ENCODE measurements at regions of chr15 and their contacts with region 1.

Region 1: GRCh38 chr15:65638681-65639089 is 16.9 kb downstream of the SLC24A1 start:
- DNase-seq: peak; percentile 84 to 96
- ATAC-seq: peak; percentile 74 to 87
- H3K4me3 ChIP-seq: no peak overlapping the region
- H3K27ac ChIP-seq: no peak overlapping the region
- H3K4me1 ChIP-seq: peaks cover 17% of the 10 kb centered on the region
- CTCF ChIP-seq: peak; percentile 97
- EP300 ChIP-seq: no peak
- POLR2A ChIP-seq: no peak
- RAD21 ChIP-seq: peak; percentile 88 to 96

Region 2: GRCh38 chr15:65610871-65611718 is 27.6 kb before region 1 on chr15 and contains the start of gene INTS14:
- CTCF ChIA-PET with region 1: interaction called, 15 read pairs
- POLR2A ChIA-PET with region 1: interaction called, 10 read pairs
- DNase-seq: peak; percentile 97 to 99
- ATAC-seq: peak; percentile 97 to 99
- H3K4me3 ChIP-seq: peak within 1 kb of the TSS; percentile 83
- H3K27ac ChIP-seq: peak within 1 kb of the TSS; percentile 93 to 94
- H3K4me1 ChIP-seq: peaks cover 18% of the 10 kb centered on the region
- CTCF ChIP-seq: peak; percentile 81
- EP300 ChIP-seq: no peak
- POLR2A ChIP-seq: peak; percentile 86
- RAD21 ChIP-seq: peak; percentile 59 to 82
- polyA plus RNA-seq, gene INTS14: 81.4 and 82.1 TPM in 2 replicates

Region 3: DNA sequence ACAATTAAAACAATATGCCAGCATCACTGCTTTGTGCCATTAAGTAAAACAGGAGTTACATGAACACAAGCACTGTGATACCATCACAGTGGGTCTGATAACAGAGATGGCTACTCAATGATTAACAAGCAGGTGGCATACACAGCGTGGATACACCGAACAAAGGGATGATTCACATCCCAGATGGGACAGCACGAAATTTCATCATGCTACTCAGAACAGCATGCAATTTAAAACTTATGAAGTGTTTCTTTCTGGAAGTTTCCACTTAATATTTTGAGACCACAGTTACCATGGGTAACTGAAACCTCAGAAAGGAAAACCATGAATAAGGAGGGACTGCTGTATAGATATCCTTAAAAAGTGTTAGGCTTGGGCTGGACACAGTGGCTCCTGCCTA is 27.6 kb after region 1 on chr15:
- CTCF ChIA-PET with region 1: interaction called, 229 read pairs
- POLR2A ChIA-PET with region 1: no interaction called
- DNase-seq: peak in 1 of 2 experiments; percentile 49
- ATAC-seq: peak; percentile 74 to 96
- H3K4me3 ChIP-seq: no peak overlapping the region
- H3K27ac ChIP-seq: peak overlapping the region; percentile 59 to 64; a peak in 4 of 6 replicates
- H3K4me1 ChIP-seq: peaks cover 11% of the 10 kb centered on the region
- CTCF ChIP-seq: no peak
- EP300 ChIP-seq: no peak
- POLR2A ChIP-seq: no peak
- RAD21 ChIP-seq: 0 out of 5 replicates have a peak, but pooled peaks of 1 of the 2 experiments have one; percentile 17

Region 4: DNA sequence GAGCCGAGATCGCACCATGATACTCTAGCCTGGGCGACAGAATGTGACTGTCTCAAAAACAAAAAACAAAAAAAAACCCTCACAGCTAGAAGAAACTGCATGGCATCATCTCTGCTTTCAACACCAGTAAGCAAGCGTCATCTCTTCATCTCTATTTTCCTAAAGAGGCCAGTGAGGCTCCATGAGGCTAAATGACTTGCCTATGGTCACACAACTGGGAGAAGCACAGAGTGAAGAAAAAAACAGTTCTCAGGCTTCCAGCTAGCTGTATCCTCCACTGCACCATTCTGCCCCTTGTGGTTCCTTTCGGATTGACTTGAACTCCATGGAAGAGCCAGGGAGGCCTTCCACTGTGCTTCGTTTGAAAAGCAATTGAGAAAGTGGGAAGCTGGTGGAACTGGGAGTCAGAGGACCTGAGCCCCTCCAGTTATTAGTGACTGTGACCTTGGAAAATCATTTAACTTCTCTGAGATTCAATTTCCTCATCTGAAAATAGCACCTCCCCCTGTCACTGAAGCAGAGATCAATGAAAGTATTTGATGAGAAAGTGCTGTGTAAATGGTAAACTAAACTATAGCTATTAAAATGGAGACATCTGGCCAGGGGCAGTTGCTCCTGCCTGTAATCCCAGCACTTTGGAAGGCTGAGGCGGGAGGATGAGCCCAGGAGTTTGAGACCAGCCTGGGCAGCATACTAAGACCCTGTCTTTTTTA is 185.5 kb after region 1 on chr15:
- CTCF ChIA-PET with region 1: interaction called, 46 read pairs
- POLR2A ChIA-PET with region 1: no interaction called
- DNase-seq: peak; percentile 82 to 88
- ATAC-seq: peak; percentile 98 to 99
- H3K4me3 ChIP-seq: no peak overlapping the region
- H3K27ac ChIP-seq: peak overlapping the region in 1 of 2 experiments; percentile 11; a peak in 2 of 6 replicates
- H3K4me1 ChIP-seq: peaks cover 27% of the 10 kb centered on the region
- CTCF ChIP-seq: peak; percentile 70
- EP300 ChIP-seq: no peak
- POLR2A ChIP-seq: no peak
- RAD21 ChIP-seq: peak; percentile 68 to 72

Region 5: GRCh38 chr15:65856821-65857455 is 218.3 kb after region 1 on chr15:
- CTCF ChIA-PET with region 1: interaction called, 54 read pairs
- POLR2A ChIA-PET with region 1: no interaction called
- DNase-seq: peak; percentile 57 to 77
- ATAC-seq: peak; percentile 89 to 90
- H3K4me3 ChIP-seq: no peak overlapping the region
- H3K27ac ChIP-seq: no peak overlapping the region
- H3K4me1 ChIP-seq: no peaks in the 10 kb centered on the region
- CTCF ChIP-seq: peak; percentile 92
- EP300 ChIP-seq: no peak
- POLR2A ChIP-seq: no peak
- RAD21 ChIP-seq: peak; percentile 55 to 56; a peak in 4 of 5 replicates